K562 (cell line): ENCODE measurements at regions of chr15 and their contacts with region 1.

Region 1: GRCh38 chr15:73633111-73633990 is at the start of gene NPTN:
- DNase-seq: peak; percentile 95 to 98 (median 96)
- ATAC-seq: peak; percentile 97
- H3K4me3 ChIP-seq: peak within 1 kb of the TSS; percentile 70
- H3K27ac ChIP-seq: peak within 1 kb of the TSS; percentile 69
- H3K4me1 ChIP-seq: peaks cover 19 to 25% of the 10 kb centered on the region in 2 experiments
- H3K27me3 ChIP-seq: no peaks in the 10 kb centered on the region
- CTCF ChIP-seq: no peak
- EP300 ChIP-seq: no peak
- POLR2A ChIP-seq: peak; percentile 91
- RAD21 ChIP-seq: no peak
- polyA plus RNA-seq, gene NPTN: 9.6 to 10.1 TPM

Region 2: GRCh38 chr15:73305331-73306211 is 327.8 kb before region 1 on chr15:
- CTCF ChIA-PET with region 1: interaction called, 11 read pairs
- POLR2A ChIA-PET with region 1: interaction called, 3 read pairs
- in situ Hi-C with region 1: no loop called
- intact Hi-C with region 1: loop called (anchors 1 kb)
- DNase-seq: peak; percentile 26 to 74 (median 46)
- ATAC-seq: peak; percentile 93
- H3K4me3 ChIP-seq: no peak overlapping the region
- H3K27ac ChIP-seq: no peak overlapping the region
- H3K4me1 ChIP-seq: no peaks in the 10 kb centered on the region; a peak in 1 of 5 replicates
- H3K27me3 ChIP-seq: peaks cover 24 to 40% of the 10 kb centered on the region in 2 experiments; a peak in 4 of 5 replicates
- CTCF ChIP-seq: peak; percentile 74 to 82 (median 77)
- EP300 ChIP-seq: no peak
- POLR2A ChIP-seq: no peak
- RAD21 ChIP-seq: peak; percentile 61 to 81

Region 3: GRCh38 chr15:73560501-73561117 is 72.7 kb before region 1 on chr15:
- CTCF ChIA-PET with region 1: interaction called, 52 read pairs
- POLR2A ChIA-PET with region 1: no interaction called
- in situ Hi-C with region 1: loop called (anchors 5 kb)
- intact Hi-C with region 1: loop called (anchors 1 kb)
- DNase-seq: peak in 2 of 4 experiments; percentile 24 to 67
- ATAC-seq: peak; percentile 82
- H3K4me3 ChIP-seq: no peak overlapping the region
- H3K27ac ChIP-seq: no peak overlapping the region
- H3K4me1 ChIP-seq: peaks cover 0 to 11% of the 10 kb centered on the region in 2 experiments; a peak in 3 of 5 replicates
- H3K27me3 ChIP-seq: no peaks in the 10 kb centered on the region
- CTCF ChIP-seq: peak; percentile 30 to 69 (median 51); a peak in 3 of 6 replicates
- EP300 ChIP-seq: no peak
- POLR2A ChIP-seq: no peak
- RAD21 ChIP-seq: peak; percentile 49 to 65

Region 4: GRCh38 chr15:73593304-73594074 is 39.9 kb before region 1 on chr15:
- CTCF ChIA-PET with region 1: interaction called, 3 read pairs
- POLR2A ChIA-PET with region 1: interaction called, 10 read pairs
- in situ Hi-C with region 1: no loop called
- intact Hi-C with region 1: loop called (anchors 5 kb)
- DNase-seq: peak in 3 of 4 experiments; percentile 16 to 71 (median 35)
- ATAC-seq: peak; percentile 69
- H3K4me3 ChIP-seq: no peak overlapping the region
- H3K27ac ChIP-seq: no peak overlapping the region
- H3K4me1 ChIP-seq: peaks cover 12 to 33% of the 10 kb centered on the region in 2 experiments
- H3K27me3 ChIP-seq: no peaks in the 10 kb centered on the region
- CTCF ChIP-seq: no peak
- EP300 ChIP-seq: no peak
- POLR2A ChIP-seq: no peak
- RAD21 ChIP-seq: no peak

Region 5: DNA sequence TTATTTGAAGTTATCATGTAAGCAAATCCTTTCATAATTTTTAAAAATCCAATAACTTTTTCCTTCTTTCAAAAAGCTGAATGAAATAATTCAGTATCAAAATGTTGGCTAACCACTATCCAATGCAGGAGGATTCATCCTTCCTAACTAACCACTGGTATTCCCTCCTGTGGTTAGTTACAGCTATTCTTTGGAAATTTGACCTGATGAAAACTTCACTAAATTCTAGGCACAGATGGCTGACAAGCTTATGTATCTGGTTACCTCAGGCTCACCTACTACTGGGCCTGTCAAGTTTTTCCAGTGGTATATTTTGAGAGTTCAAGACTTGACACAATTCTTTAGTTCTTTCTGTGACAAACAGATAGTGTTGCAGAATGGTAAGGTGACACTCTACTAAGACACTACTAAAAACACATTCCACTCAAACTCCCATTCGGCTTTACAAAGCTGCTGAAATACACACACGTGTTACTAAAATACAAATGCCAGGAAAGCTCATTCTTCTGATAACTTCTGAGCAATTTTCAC is 16.0 kb before region 1 on chr15:
- CTCF ChIA-PET with region 1: no interaction called
- POLR2A ChIA-PET with region 1: interaction called, 18 read pairs
- in situ Hi-C with region 1: no loop called
- intact Hi-C with region 1: no loop called
- DNase-seq: no peak
- ATAC-seq: no peak
- H3K4me3 ChIP-seq: no peak overlapping the region
- H3K27ac ChIP-seq: no peak overlapping the region
- H3K4me1 ChIP-seq: no peaks in the 10 kb centered on the region
- H3K27me3 ChIP-seq: no peaks in the 10 kb centered on the region
- CTCF ChIP-seq: no peak
- EP300 ChIP-seq: no peak
- POLR2A ChIP-seq: no peak
- RAD21 ChIP-seq: no peak